Endothelial cell of umbilical vein (primary cell): ENCODE measurements at regions of chr7 and their contacts with region 1.

Region 1: GRCh38 chr7:106644999-106645398 is 16.0 kb downstream of the CCDC71L start:
- DNase-seq: no peak
- H3K4me3 ChIP-seq: no peak overlapping the region
- H3K27ac ChIP-seq: no peak overlapping the region
- H3K4me1 ChIP-seq: peaks cover 12% of the 10 kb centered on the region
- H3K27me3 ChIP-seq: no peaks in the 10 kb centered on the region
- CTCF ChIP-seq: no peak
- POLR2A ChIP-seq: no peak

Region 2: DNA sequence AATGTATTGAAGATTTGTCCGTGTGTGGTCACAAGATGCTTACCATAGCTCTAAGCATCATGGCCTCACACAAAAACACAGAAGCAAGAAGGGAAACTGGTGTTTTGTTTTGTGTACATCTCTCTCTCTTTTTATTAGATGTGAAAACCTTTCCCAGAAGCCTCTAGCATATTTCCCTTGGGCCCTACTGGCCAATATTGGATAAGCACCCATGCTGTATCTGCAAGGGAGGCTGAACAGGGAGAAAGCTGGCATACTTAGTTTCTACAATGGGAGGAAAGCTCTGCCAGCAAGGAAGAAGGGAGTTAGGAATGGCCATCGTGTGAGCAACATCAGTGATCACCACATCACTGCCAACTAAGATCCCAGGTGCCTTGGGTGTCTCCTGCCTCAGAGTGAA is 350.7 kb before region 1 on chr7:
- CTCF ChIA-PET with region 1: no interaction called
- POLR2A ChIA-PET with region 1: no interaction called
- dilution Hi-C with region 1: no loop called
- intact Hi-C with region 1: no loop called
- DNase-seq: no peak
- H3K4me3 ChIP-seq: no peak overlapping the region
- H3K27ac ChIP-seq: no peak overlapping the region
- H3K4me1 ChIP-seq: no peaks in the 10 kb centered on the region
- H3K27me3 ChIP-seq: no peaks in the 10 kb centered on the region
- CTCF ChIP-seq: no peak
- POLR2A ChIP-seq: no peak

Region 3: GRCh38 chr7:106629516-106629915 is 15.5 kb before region 1 on chr7:
- CTCF ChIA-PET with region 1: interaction called, 13 read pairs
- POLR2A ChIA-PET with region 1: no interaction called
- dilution Hi-C with region 1: no loop called
- intact Hi-C with region 1: no loop called
- DNase-seq: peak; percentile 39
- H3K4me3 ChIP-seq: no peak overlapping the region
- H3K27ac ChIP-seq: no peak overlapping the region
- H3K4me1 ChIP-seq: peaks cover 16% of the 10 kb centered on the region
- H3K27me3 ChIP-seq: peaks cover 10 to 17% of the 10 kb centered on the region in 2 experiments
- CTCF ChIP-seq: no peak
- POLR2A ChIP-seq: no peak

Region 4: DNA sequence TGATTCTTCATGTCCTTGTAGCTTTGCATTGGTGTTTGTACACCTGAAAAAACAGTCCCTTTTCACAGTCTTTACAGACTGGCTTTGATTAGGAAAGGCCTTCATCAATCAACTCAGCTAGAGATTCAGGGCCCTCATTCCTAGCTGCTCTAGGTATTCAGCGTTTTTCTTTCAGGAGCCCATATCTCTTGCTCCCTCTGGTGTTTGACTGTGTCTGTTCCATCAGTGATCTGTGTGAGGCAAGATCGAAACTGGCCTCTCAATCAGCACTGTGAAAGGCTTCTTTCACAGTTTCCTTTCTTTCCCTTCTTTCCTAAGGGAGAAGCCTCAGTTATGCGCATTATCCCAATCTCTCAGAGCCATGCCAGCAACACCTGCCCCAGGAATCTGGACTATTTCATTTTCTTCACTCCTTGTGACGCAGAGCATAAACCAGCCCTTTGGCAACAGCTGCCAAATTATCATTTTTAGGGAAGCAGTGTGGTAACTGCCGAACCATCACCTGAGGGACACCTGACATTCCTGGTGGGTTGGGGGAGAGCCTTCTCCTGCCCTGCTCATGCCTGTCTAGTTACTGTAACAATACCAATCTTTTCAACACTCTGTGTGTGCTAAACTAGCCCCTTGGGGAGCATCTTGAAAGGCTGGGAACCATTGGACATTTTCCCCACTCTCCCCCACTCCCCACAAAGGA is 91.7 kb after region 1 on chr7:
- CTCF ChIA-PET with region 1: interaction called, 13 read pairs
- POLR2A ChIA-PET with region 1: no interaction called
- dilution Hi-C with region 1: no loop called
- intact Hi-C with region 1: no loop called
- DNase-seq: peak; percentile 84
- H3K4me3 ChIP-seq: no peak overlapping the region
- H3K27ac ChIP-seq: peak overlapping the region; percentile 37
- H3K4me1 ChIP-seq: peaks cover 18% of the 10 kb centered on the region
- H3K27me3 ChIP-seq: no peaks in the 10 kb centered on the region
- CTCF ChIP-seq: peak; percentile 65 to 74
- POLR2A ChIP-seq: no peak